ENCODE measurements at regions of chr17 and their contacts with region 1.

Region 1: GRCh38 chr17:75412455-75413317 is 7.2 kb upstream of the GRB2 start:
- DNase-seq: peak; percentile 58 to 83
- H3K4me3 ChIP-seq: no peak overlapping the region
- H3K4me1 ChIP-seq: no peaks in the 10 kb centered on the region
- H3K27me3 ChIP-seq: 0 out of 2 replicates have a peak, but pooled peaks cover 2% of the 10 kb centered on the region

Region 2: DNA sequence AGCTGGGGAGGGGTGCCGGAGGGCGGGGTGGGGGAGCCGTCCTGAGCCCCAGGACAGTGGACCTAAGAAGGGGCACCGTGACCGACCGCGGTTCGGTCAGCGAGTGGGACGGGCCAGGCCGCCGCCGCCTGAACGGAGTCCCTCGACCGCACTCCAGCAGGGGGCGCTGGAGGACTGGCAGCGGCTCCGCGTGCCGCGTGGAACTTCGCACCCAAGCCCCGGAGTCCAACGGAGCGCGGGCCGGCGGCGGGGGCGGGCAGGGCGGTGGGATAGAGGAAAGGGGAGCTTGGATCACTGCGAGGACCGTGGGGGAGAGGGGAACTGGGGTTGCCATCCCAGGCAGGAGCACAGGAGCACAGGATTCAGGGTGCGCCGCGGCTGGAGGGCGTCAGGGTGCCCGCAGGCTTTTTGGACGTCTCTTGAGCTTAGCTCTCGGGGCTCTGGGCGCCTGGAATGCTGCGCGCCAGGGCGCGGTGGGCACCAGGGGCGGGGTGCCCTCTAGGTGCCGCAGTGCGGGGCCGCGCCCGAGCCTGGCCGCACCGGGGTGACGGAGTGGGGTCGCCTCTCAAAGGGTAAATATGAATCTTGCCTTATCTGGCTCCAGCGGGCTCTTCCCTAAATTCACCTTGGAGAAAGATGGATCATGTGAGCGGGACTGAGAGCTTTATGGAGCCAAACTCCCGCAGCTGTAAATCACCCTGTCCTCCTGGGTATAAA is 489.0 kb before region 1 on chr17:
- in situ Hi-C with region 1: loop called (anchors 10 kb)
- DNase-seq: peak in 1 of 2 experiments; percentile 82
- H3K4me3 ChIP-seq: peak overlapping the region; percentile 37
- H3K4me1 ChIP-seq: no peaks in the 10 kb centered on the region; the same call in 1 of the 2 replicates
- H3K27me3 ChIP-seq: peaks cover 43% of the 10 kb centered on the region

Region 3: GRCh38 chr17:74961657-74962490 is 450.8 kb before region 1 on chr17:
- in situ Hi-C with region 1: loop called (anchors 10 kb)
- DNase-seq: peak; percentile 87 to 95
- H3K4me3 ChIP-seq: no peak overlapping the region
- H3K4me1 ChIP-seq: peaks cover 3% of the 10 kb centered on the region
- H3K27me3 ChIP-seq: no peaks in the 10 kb centered on the region

Region 4: DNA sequence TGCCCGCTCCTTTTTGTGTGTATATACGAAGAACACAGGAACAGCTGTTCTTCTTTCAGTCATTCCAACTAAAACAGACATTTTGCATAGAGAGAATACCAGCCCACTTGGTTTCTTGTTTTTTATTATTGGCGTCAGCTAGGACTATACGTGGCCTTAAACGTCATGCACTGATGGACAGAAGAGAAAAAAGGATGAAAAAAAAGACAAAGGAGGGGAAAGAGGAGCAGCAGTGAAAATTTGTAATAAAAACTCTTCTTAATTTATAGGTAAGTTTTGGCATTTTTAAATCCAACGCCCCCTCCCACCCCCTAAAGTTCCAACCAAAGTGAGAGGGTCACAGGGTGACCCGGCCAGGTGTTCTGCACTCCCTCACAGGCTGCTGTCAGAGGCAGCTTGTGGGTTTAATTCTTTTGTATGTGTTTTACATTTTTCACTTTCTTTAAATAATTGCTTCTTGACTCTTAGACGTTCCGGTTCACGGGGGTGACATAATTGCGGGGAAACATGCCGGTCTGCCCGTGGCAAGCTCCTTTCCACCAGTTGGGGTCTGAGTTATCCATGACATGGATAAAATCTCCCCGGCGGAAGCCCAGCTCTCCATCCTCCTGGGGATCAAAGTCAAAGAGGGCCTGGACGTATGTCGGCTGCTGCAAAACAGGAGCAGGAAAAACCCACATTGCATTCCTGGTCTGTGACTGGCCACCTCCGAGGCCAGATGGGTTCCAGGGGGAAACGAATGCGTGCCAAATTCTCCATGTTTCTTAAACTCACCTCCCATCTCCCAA is 92.6 kb before region 1 on chr17:
- in situ Hi-C with region 1: loop called (anchors 5 kb)
- DNase-seq: no peak
- H3K4me3 ChIP-seq: no peak overlapping the region
- H3K4me1 ChIP-seq: no peaks in the 10 kb centered on the region
- H3K27me3 ChIP-seq: no peaks in the 10 kb centered on the region